ENCODE measurements at regions of chr20 and their contacts with region 1.

Region 1: DNA sequence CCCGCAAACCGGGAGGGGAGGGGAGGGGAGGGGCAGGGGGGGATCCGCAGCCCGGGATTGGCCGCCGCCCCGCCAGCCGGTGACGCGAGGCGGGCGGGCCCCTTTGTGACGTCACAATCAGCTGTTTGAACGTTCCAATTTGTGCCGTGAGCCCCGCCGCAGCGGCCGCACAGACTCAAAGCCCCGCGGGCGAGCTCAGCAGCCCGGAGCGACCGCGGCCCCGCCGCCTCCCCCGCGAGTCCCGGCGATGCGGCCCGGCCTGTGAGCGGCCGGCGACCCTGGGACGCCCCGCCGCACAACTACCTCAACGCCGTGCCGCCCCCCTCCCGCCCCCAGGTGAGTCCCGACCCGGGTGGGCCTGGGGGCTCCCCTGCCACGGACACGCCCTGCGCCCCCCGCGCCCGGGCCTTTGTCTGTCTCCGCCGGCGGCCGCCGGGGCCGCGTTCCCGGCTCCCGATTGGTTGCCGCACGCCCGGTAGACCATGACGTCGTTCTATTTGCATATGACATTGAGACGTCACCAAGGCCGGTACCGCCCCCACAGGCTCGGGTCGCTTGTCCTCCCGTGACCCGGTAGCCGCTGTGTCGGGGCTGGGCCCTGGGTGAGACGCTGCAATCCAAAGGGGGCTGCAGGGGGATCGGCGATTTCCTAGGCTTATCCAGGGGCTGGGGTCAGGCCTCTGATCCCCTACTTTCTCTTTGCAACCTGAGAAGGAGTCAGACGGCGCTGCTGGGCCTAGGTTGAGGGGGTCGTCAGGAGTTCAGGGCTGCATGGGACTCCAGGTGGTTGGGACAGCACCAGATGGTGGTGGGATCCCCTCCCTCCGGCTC is at the start of gene TP53INP2:
- DNase-seq: peak; percentile 94 to 96
- ATAC-seq: peak; percentile 79 to 88 (median 86)
- H3K4me3 ChIP-seq: peak within 1 kb of the TSS; percentile 58 to 91 (median 79)
- H3K27ac ChIP-seq: peak within 1 kb of the TSS; percentile 98 to 100 (median 100)
- H3K4me1 ChIP-seq: peaks cover 5 to 53% (median 43%) of the 10 kb centered on the region in 9 donors
- H3K27me3 ChIP-seq: no peaks in the 10 kb centered on the region
- CTCF ChIP-seq: no peak
- total RNA-seq, gene TP53INP2: 73.4 to 174 (median 136) TPM

Region 2: DNA sequence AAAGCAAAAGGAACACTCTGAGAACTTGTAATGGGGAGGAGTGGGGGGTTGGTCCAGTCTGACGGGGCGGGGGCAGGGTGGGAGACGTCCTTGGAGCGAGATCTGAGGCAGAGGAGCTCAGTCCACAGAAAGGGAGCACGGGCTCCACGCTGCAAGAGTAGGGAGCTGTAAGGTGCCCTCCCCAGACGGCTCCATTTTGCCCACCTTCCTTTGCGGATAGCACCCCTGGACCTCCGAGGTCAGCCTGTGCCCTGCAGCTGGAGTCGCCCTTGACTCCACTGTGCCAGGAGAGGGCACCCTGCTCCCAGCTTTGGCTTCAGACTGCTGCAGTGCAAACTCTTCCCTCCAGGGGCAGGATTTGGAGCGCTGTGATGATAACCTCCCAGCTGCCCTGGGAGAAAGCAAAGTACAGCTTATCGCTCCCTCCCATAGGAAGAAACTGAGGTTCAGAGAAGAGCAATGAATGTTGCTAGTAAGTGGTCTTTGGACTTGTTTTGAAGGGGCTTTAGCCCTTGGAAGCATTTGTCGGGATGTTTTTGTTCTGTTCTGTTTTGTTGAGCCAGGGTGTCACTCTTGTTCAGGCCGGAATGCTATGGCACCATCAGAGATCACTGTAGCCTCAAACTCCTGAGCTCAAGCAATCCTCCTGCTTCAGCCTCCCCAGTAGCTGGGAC is 391.7 kb before region 1 on chr20:
- intact Hi-C with region 1: loop called in 2 of 10 experiments (anchors 5 to 10 kb)
- DNase-seq: peak; percentile 82 to 86
- ATAC-seq: peak; percentile 95 to 99 (median 98)
- H3K4me3 ChIP-seq: peak overlapping the region in 6 of 10 donors; percentile 11 to 31 (median 30)
- H3K27ac ChIP-seq: no peak overlapping the region
- H3K4me1 ChIP-seq: peaks cover 3 to 22% (median 17%) of the 10 kb centered on the region in 9 donors
- H3K27me3 ChIP-seq: peaks cover 0 to 19% (median 11%) of the 10 kb centered on the region in 7 donors
- CTCF ChIP-seq: peak; percentile 97 to 100 (median 100)

Region 3: DNA sequence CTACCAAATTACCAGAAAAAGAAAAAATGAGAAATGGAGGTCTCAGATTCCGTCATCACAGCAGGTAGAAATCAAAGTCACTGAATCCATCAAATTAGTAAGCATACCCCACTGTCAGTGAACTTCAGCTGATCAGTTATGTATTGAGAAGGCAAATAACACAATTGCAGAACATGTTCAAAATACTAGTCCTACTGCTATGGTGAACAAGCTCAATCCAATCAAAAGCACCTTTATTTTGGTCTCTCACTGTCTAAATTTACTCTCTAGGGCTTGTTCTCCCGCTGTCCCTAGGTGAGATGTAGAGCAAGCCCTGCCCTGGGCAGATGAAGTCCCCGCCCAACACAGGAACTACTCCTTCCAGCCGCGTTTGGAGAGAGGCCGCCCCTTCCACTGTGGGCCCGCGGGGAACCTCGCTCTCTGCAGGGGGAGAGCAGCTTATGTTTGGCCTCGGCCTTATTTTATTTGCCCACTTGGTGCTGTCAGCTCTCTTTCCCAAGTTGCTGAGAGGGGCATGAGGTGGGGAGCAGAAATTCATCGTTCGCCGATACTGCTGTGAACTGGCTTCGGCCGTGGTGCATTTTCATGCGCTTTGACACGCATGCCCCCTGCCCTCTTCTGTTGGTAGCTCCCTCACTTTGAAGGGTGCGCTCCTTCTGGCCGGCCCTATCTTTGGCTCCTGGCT is 160.1 kb before region 1 on chr20:
- intact Hi-C with region 1: loop called in 9 of 10 experiments (anchors 5 to 10 kb)
- DNase-seq: no peak
- ATAC-seq: peak in 4 of 8 donors; percentile 62 to 70 (median 62)
- H3K4me3 ChIP-seq: peak overlapping the region in 4 of 10 donors; percentile 11 to 35 (median 26)
- H3K27ac ChIP-seq: no peak overlapping the region
- H3K4me1 ChIP-seq: peaks cover 0 to 38% (median 15%) of the 10 kb centered on the region in 9 donors
- H3K27me3 ChIP-seq: no peaks in the 10 kb centered on the region
- CTCF ChIP-seq: no peak

Region 4: GRCh38 chr20:34579191-34579978 is 125.0 kb before region 1 on chr20:
- intact Hi-C with region 1: loop called in 5 of 10 experiments (anchors 5 to 10 kb)
- DNase-seq: peak; percentile 56 to 60
- ATAC-seq: peak; percentile 80 to 94 (median 90)
- H3K4me3 ChIP-seq: no peak overlapping the region
- H3K27ac ChIP-seq: peak overlapping the region; percentile 51 to 86 (median 76)
- H3K4me1 ChIP-seq: peaks cover 11 to 59% (median 54%) of the 10 kb centered on the region in 9 donors
- H3K27me3 ChIP-seq: no peaks in the 10 kb centered on the region
- CTCF ChIP-seq: peak in 8 of 9 donors; percentile 27 to 72 (median 52)

Region 5: DNA sequence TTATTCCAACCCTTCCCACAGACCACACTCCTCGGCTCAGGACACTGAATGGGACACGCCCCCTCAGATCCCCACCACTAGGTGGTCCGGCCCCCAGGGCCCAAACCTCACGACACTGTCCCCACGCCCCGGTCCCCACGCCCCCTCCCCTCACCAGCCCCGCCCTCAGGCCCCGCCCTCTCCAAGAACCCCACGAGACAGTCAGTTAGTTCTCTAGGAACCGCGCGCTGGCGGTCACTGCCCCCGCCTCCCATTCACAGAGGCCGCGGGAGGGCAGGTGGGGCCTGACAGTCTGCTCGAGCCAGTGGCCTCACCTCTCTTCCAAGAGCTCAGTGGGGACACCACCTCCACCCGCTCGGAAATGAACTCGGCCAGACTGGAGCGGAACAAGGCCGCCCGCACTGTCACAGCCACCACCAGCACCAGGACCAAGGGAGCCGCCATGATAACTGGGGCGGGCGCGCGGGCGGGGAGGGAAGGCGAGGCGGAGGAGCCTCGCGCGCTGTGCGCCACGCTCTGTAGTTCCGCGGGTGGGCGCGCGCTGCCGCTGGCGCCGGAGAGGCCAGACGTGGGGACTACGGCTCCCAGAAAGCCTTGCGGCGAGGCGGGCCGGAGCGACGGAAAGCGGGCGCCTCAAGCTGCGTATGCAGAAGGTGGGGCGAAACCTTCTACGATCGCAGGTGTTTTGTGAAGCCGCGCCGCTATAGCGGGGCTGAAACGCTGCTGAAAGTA is 27.6 kb before region 1 on chr20 and contains the start of gene PIGU:
- intact Hi-C with region 1: loop called in 2 of 10 experiments (anchors 1 to 2 kb)
- DNase-seq: peak; percentile 94 to 95
- ATAC-seq: peak; percentile 100
- H3K4me3 ChIP-seq: peak within 1 kb of the TSS; percentile 50 to 84 (median 76)
- H3K27ac ChIP-seq: peak within 1 kb of the TSS in 9 of 10 donors; percentile 53 to 89 (median 79)
- H3K4me1 ChIP-seq: peaks cover 0 to 20% (median 11%) of the 10 kb centered on the region in 9 donors
- H3K27me3 ChIP-seq: no peaks in the 10 kb centered on the region
- CTCF ChIP-seq: peak in 7 of 9 donors; percentile 20 to 60 (median 32)
- total RNA-seq, gene PIGU: 11.0 to 20.4 (median 14.1) TPM

Measured in heart right ventricle (tissue), 16 donors.